ENCODE measurements at regions of chr15 and their contacts with region 1.

Region 1: DNA sequence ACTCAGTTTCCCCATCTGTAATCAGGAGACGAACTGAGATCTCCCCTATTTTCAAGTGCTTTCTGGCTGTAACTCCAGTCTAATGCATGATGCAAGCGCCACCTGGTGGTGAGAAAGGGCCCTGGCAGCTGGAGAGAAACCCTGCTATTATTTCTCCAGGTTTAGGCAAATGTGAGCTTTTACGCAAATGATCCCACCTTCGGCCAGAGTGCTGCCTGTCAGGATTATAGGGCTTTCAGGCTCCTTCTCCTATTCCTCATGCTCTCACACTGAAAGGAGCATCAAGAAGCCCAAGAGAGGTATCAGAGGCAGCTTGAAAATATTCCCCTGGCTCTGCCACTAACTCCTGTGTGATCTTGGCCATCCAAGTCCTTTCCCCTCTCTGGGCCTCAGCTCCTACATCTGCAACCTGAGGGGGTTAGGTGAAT is 93.9 kb upstream of the RASGRF1 start:
- DNase-seq: peak; percentile 68
- H3K4me3 ChIP-seq: no peak overlapping the region
- H3K27ac ChIP-seq: no peak overlapping the region
- H3K4me1 ChIP-seq: no peaks in the 10 kb centered on the region
- H3K27me3 ChIP-seq: no peaks in the 10 kb centered on the region
- CTCF ChIP-seq: peak; percentile 98

Region 2: DNA sequence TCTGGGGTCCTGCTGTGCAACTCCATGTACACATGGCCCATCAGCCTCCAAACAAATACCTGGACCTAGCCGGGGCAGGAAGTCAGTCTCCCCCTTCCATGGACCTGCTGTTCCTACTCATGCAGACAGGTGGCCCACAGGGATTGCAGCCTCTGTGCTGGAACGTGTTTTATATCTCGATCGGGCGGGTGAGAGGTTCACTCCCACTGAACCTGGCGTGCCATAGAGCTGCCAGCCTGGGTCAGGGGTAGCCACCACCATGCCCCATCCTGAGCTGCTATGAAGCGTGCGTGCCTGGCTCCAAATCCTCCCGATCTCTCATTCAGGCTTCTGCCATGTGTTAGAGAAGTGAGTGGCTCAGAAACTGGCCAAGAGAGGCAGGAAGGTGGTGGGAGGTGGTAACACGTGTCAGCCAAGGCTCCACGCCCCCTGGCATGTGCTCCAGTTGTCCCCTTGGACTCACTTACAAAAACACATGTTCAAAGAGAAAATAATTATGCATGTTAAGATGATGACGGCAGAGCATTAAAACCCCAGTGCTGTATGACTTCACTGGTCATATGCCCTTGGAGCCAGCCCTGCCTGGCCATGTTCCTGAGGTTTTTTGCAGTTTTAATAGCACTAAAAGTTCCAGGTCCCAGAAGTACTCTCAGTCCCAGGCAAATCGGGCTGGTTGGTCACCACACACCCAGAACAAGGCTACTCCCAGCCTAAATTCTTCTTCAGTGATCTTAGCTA is 270.3 kb before region 1 on chr15:
- CTCF ChIA-PET with region 1: no interaction called
- POLR2A ChIA-PET with region 1: no interaction called
- intact Hi-C with region 1: loop called (anchors 2 kb)
- DNase-seq: no peak
- H3K4me3 ChIP-seq: no peak overlapping the region
- H3K27ac ChIP-seq: no peak overlapping the region
- H3K4me1 ChIP-seq: no peaks in the 10 kb centered on the region
- H3K27me3 ChIP-seq: no peaks in the 10 kb centered on the region
- CTCF ChIP-seq: peak; percentile 41; the same call in 1 of the 2 replicates

Region 3: GRCh38 chr15:79028411-79028964 is 156.0 kb before region 1 on chr15:
- CTCF ChIA-PET with region 1: interaction called, 50 read pairs
- POLR2A ChIA-PET with region 1: no interaction called
- intact Hi-C with region 1: loop called (anchors 1 kb)
- DNase-seq: peak; percentile 73
- H3K4me3 ChIP-seq: no peak overlapping the region
- H3K27ac ChIP-seq: no peak overlapping the region
- H3K4me1 ChIP-seq: no peaks in the 10 kb centered on the region
- H3K27me3 ChIP-seq: no peaks in the 10 kb centered on the region
- CTCF ChIP-seq: peak; percentile 93

Region 4: DNA sequence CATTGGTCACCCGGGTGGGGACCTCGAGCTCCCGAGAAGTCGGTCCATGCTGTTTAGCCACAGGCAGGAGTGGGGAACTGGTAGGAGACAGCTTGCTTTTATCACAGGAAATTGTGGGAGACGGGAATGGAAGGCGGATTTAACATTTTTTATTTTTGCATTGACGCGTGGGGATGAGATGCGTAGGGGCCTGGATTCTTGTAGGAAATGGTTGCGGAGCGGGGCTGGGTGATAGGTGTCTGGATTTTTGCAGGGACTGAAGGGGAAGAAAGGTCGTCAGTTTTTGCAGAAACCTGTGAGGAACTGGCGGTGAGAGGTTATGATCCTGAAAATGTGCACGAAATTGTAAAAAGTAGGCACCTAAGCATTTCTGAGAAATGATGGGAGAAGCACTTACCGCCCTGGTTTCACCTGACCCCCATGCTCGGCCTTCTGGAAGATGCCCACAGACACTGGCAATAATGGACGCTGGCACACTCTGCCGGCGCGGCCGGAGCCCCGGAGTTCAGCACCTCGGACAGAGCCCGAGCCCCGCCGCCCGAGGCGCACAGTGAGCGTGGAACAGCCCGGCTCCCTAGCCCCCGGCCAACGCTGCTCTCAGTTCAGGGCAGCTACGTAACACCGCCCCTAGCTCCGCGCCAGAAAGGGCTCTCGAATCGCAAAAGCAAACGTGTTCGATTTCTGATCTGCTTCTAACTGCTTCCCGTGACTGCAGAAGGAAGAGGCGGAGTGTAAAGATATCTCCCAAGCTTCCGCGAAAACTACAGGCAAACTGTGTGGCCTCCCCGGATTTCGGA is 99.0 kb after region 1 on chr15:
- CTCF ChIA-PET with region 1: no interaction called
- POLR2A ChIA-PET with region 1: no interaction called
- intact Hi-C with region 1: no loop called
- DNase-seq: peak; percentile 56
- H3K4me3 ChIP-seq: no peak overlapping the region
- H3K27ac ChIP-seq: no peak overlapping the region
- H3K4me1 ChIP-seq: no peaks in the 10 kb centered on the region
- H3K27me3 ChIP-seq: peaks cover 97% of the 10 kb centered on the region
- CTCF ChIP-seq: no peak